Naive thymus-derived CD4-positive, alpha-beta T cell (primary cell): ENCODE measurements at regions of chr1 and their contacts with region 1.

Region 1: GRCh38 chr1:172089768-172090510 is 248.6 kb downstream of the DNM3 start:
- DNase-seq: peak; percentile 25 to 61 (median 46)
- ATAC-seq: peak; percentile 86
- H3K4me3 ChIP-seq: no peak overlapping the region
- H3K4me3 Mint-ChIP-seq: peak overlapping the region in 3 of 10 donors; percentile 9 to 35 (median 24)
- H3K27ac ChIP-seq: no peak overlapping the region
- H3K27ac Mint-ChIP-seq: peak overlapping the region in 4 of 9 donors; percentile 1 to 72 (median 50)
- H3K4me1 ChIP-seq: no peaks in the 10 kb centered on the region
- H3K4me1 Mint-ChIP-seq: peaks cover 0 to 7% (median 6%) of the 10 kb centered on the region in 7 donors
- H3K27me3 ChIP-seq: no peaks in the 10 kb centered on the region
- H3K27me3 Mint-ChIP-seq: peaks cover 0 to 7% (median 0%) of the 10 kb centered on the region in 5 donors

Region 2: GRCh38 chr1:172002725-172003345 is 87.1 kb before region 1 on chr1:
- CTCF ChIA-PET with region 1: no interaction called
- POLR2A ChIA-PET with region 1: no interaction called
- intact Hi-C with region 1: loop called (anchors 1 to 5 kb)
- DNase-seq: peak in 7 of 9 donors; percentile 8 to 53 (median 37)
- ATAC-seq: peak; percentile 55
- H3K4me3 ChIP-seq: no peak overlapping the region
- H3K4me3 Mint-ChIP-seq: no peak overlapping the region
- H3K27ac ChIP-seq: no peak overlapping the region
- H3K27ac Mint-ChIP-seq: no peak overlapping the region
- H3K4me1 ChIP-seq: no peaks in the 10 kb centered on the region
- H3K4me1 Mint-ChIP-seq: peaks cover 0 to 8% (median 3%) of the 10 kb centered on the region in 7 donors
- H3K27me3 ChIP-seq: no peaks in the 10 kb centered on the region
- H3K27me3 Mint-ChIP-seq: no peaks in the 10 kb centered on the region

Region 3: GRCh38 chr1:172135076-172135672 is 45.2 kb after region 1 on chr1:
- CTCF ChIA-PET with region 1: interaction called, 4 read pairs
- POLR2A ChIA-PET with region 1: no interaction called
- intact Hi-C with region 1: loop called in 1 of 2 experiments (anchors 1 kb)
- DNase-seq: peak in 6 of 9 donors; percentile 9 to 37 (median 22)
- ATAC-seq: peak; percentile 48
- H3K4me3 ChIP-seq: no peak overlapping the region
- H3K4me3 Mint-ChIP-seq: no peak overlapping the region
- H3K27ac ChIP-seq: no peak overlapping the region
- H3K27ac Mint-ChIP-seq: no peak overlapping the region
- H3K4me1 ChIP-seq: no peaks in the 10 kb centered on the region
- H3K4me1 Mint-ChIP-seq: peaks cover 0 to 12% (median 0%) of the 10 kb centered on the region in 7 donors
- H3K27me3 ChIP-seq: no peaks in the 10 kb centered on the region
- H3K27me3 Mint-ChIP-seq: no peaks in the 10 kb centered on the region

Region 4: DNA sequence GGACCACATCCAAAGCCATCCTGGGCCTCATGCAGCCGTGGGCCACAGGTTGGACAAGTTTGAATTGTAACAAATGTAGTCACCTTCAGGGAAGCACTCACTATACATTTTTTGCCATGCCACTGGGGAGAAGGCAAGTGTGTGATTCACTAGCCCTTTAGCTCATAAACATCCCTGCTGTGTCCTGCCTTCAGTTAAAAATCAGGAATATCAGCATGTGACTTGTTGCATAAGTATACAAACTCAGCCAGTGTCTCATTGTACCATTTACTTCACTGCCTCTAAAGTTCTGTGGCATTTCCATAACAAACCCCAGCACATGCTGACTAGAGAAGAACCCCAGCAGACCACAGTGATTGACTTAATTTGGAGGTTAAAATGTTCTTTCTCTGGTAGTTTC is 188.5 kb after region 1 on chr1:
- CTCF ChIA-PET with region 1: no interaction called
- POLR2A ChIA-PET with region 1: no interaction called
- intact Hi-C with region 1: loop called in 1 of 2 experiments (anchors 10 kb)
- DNase-seq: no peak
- ATAC-seq: no peak
- H3K4me3 ChIP-seq: no peak overlapping the region
- H3K4me3 Mint-ChIP-seq: no peak overlapping the region
- H3K27ac ChIP-seq: no peak overlapping the region
- H3K27ac Mint-ChIP-seq: no peak overlapping the region
- H3K4me1 ChIP-seq: no peaks in the 10 kb centered on the region
- H3K4me1 Mint-ChIP-seq: peaks cover 0 to 16% (median 0%) of the 10 kb centered on the region in 7 donors
- H3K27me3 ChIP-seq: no peaks in the 10 kb centered on the region
- H3K27me3 Mint-ChIP-seq: no peaks in the 10 kb centered on the region

Region 5: DNA sequence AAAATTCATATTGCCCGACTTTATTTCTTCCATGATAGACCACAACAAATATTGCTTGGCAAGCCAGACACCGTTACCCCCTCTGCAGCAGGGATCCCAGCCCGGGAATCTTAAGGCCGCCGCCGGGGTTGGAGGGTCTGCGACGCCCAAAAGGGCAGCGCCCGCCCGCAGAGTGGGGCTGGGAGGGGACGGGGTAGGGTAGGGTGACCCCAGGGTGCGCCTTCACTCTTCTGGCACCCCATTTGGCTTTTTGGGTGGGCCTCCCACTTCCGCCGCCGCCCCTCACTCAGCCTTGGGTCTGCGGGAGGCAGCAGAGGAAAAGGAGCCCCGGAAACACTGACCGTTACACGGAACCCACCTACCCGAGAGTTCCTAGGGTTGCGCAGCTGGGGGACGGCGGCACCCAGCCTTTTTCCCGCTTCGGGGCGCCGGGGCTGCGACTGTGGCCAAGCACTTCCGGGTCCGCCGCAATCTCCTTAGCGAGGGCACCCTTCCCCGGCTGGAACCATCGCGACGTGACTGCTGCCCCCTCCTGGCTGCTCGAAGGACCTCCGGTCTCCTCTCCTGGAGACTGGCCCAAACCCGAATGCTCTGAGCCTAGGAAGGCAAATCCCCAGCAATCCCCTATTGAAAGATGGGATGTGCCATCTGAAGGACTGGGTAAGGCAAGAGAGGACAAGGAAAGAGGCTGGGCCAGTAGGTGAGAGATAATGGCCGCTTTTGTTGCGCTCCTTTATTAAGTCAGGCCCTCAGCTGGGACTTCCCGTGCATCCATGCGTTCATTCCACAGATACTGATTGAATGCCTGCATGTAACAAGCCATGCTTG is 353.9 kb after region 1 on chr1 and contains the start of gene PIGC:
- CTCF ChIA-PET with region 1: interaction called, 3 read pairs
- POLR2A ChIA-PET with region 1: no interaction called
- intact Hi-C with region 1: loop called (anchors 1 kb)
- DNase-seq: peak; percentile 78 to 89 (median 87)
- ATAC-seq: peak; percentile 100
- H3K4me3 ChIP-seq: peak within 1 kb of the TSS; percentile 72
- H3K4me3 Mint-ChIP-seq: peak within 1 kb of the TSS; percentile 87 to 98 (median 94)
- H3K27ac ChIP-seq: peak within 1 kb of the TSS; percentile 83
- H3K27ac Mint-ChIP-seq: peak within 1 kb of the TSS; percentile 91 to 97 (median 93)
- H3K4me1 ChIP-seq: peaks cover 15 to 25% of the 10 kb centered on the region in 2 donors
- H3K4me1 Mint-ChIP-seq: peaks cover 27 to 53% (median 47%) of the 10 kb centered on the region in 7 donors
- H3K27me3 ChIP-seq: no peaks in the 10 kb centered on the region
- H3K27me3 Mint-ChIP-seq: no peaks in the 10 kb centered on the region
- total RNA-seq, gene PIGC: 21.1 to 57.4 (median 25.1) TPM

Region 6: GRCh38 chr1:172457479-172458130 is 367.7 kb after region 1 on chr1:
- CTCF ChIA-PET with region 1: no interaction called
- POLR2A ChIA-PET with region 1: no interaction called
- intact Hi-C with region 1: no loop called
- DNase-seq: no peak
- ATAC-seq: no peak
- H3K4me3 ChIP-seq: no peak overlapping the region
- H3K4me3 Mint-ChIP-seq: no peak overlapping the region
- H3K27ac ChIP-seq: no peak overlapping the region
- H3K27ac Mint-ChIP-seq: no peak overlapping the region
- H3K4me1 ChIP-seq: no peaks in the 10 kb centered on the region
- H3K4me1 Mint-ChIP-seq: peaks cover 0 to 2% (median 0%) of the 10 kb centered on the region in 7 donors
- H3K27me3 ChIP-seq: no peaks in the 10 kb centered on the region
- H3K27me3 Mint-ChIP-seq: peaks cover 0 to 41% (median 5%) of the 10 kb centered on the region in 5 donors